HepG2 (cell line): ENCODE measurements at regions of chr9 and their contacts with region 1.

Region 1: GRCh38 chr9:34178520-34179212 is at the start of gene UBAP1:
- DNase-seq: peak; percentile 96
- ATAC-seq: peak; percentile 96
- H3K4me3 ChIP-seq: peak within 1 kb of the TSS; percentile 80 to 97 (median 84)
- H3K27ac ChIP-seq: peak within 1 kb of the TSS; percentile 82
- H3K4me1 ChIP-seq: peaks cover 8% of the 10 kb centered on the region
- H3K27me3 ChIP-seq: peaks cover 0 to 3% of the 10 kb centered on the region in 2 experiments; a peak in 1 of 5 replicates
- CTCF ChIP-seq: no peak
- EP300 ChIP-seq: no peak
- POLR2A ChIP-seq: peak; percentile 61 to 90
- RAD21 ChIP-seq: no peak
- total RNA-seq, gene UBAP1: 19.5 and 25.0 TPM in 2 replicates

Region 2: DNA sequence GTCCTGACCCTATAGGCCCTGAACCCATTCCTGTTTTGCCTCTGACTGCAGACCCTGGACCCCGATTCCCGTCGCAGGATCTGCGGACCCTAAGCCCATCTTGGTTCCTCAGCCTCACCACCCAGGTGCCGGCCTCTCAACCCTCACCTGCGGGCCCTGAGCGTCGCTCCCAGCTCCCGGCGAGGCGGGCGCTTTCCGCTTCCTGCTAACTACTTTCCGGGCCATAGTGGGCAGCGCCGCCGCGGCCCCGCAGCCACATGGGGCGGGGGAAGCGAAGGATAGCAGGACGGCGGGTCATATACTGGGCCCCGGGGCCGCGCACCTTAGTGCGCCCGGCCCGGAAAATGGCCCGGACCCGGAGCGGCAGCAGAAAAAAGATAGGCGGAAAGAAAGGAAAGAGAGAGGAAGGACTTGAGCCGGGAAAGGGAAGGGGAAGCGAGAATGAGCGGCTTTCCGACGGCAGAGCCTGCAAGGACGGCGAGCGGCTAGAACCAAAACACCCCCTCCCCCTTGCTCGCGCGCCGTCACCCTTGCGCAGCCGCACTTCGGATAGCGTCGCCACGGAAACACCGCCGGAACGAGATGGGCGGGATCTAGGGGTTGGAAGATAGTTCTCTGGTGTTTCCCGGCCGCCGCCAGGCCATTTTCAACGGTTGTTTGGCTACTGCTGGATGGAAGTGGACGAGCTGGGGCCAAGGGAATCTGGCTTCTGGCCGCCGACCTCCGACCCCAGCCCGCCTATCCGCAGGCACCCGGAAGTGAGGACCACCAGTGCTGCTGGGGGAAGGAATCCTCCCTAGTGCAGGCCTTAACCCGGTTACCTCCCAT is 52.2 kb before region 1 on chr9 and contains the start of gene DCAF12:
- CTCF ChIA-PET with region 1: no interaction called
- POLR2A ChIA-PET with region 1: interaction called, 8 read pairs
- in situ Hi-C with region 1: no loop called
- intact Hi-C with region 1: loop called (anchors 5 kb)
- DNase-seq: peak; percentile 85
- ATAC-seq: peak; percentile 93
- H3K4me3 ChIP-seq: peak within 1 kb of the TSS; percentile 66 to 88 (median 86)
- H3K27ac ChIP-seq: peak within 1 kb of the TSS; percentile 86
- H3K4me1 ChIP-seq: peaks cover 48% of the 10 kb centered on the region
- H3K27me3 ChIP-seq: no peaks in the 10 kb centered on the region; a peak in 1 of 5 replicates
- CTCF ChIP-seq: 0 out of 2 replicates have a peak, but pooled peaks have one; percentile 4
- EP300 ChIP-seq: 0 out of 4 replicates have a peak, but pooled peaks of 1 of the 2 experiments have one; percentile 5
- POLR2A ChIP-seq: peak; percentile 73 to 77
- RAD21 ChIP-seq: peak; percentile 43
- total RNA-seq, gene DCAF12: 26.8 and 36.6 TPM in 2 replicates

Region 3: DNA sequence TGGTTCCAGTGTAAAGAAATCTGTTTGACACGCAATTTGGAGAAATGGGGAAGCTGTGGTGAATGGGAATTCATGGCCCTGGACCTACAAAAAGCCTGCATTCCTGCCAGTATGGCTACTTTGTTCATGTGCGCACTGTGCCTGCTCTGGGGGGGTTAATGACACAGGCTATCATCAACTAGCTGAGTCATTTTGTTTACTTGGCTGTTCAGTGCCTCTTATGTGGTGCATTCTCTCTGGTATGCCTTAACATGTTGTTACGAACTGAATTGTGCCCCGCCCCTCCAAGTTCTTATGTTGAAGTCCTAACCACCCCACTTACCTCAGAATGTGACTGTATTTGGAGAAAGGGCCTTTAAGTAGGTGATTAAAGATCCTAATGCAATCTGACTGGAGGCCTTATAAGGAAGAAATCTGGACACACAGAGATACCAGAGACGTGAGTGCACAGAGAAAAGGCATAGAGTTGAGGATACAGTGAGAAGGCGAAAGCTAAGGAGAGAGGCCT is 20.2 kb before region 1 on chr9:
- CTCF ChIA-PET with region 1: no interaction called
- POLR2A ChIA-PET with region 1: interaction called, 35 read pairs
- in situ Hi-C with region 1: no loop called
- intact Hi-C with region 1: no loop called
- DNase-seq: peak; percentile 79
- ATAC-seq: peak; percentile 95
- H3K4me3 ChIP-seq: peak overlapping the region in 2 of 3 experiments; percentile 22; a peak in 1 of 6 replicates
- H3K27ac ChIP-seq: no peak overlapping the region
- H3K4me1 ChIP-seq: peaks cover 27% of the 10 kb centered on the region
- H3K27me3 ChIP-seq: no peaks in the 10 kb centered on the region
- CTCF ChIP-seq: no peak
- EP300 ChIP-seq: peak in 1 of 2 experiments; percentile 25; a peak in 1 of 4 replicates
- POLR2A ChIP-seq: no peak
- RAD21 ChIP-seq: no peak

Region 4: GRCh38 chr9:34163458-34163857 is 15.2 kb before region 1 on chr9:
- CTCF ChIA-PET with region 1: no interaction called
- POLR2A ChIA-PET with region 1: interaction called, 35 read pairs
- in situ Hi-C with region 1: no loop called
- intact Hi-C with region 1: no loop called
- DNase-seq: no peak
- ATAC-seq: no peak
- H3K4me3 ChIP-seq: no peak overlapping the region
- H3K27ac ChIP-seq: no peak overlapping the region
- H3K4me1 ChIP-seq: peaks cover 14% of the 10 kb centered on the region
- H3K27me3 ChIP-seq: no peaks in the 10 kb centered on the region
- CTCF ChIP-seq: no peak
- EP300 ChIP-seq: no peak
- POLR2A ChIP-seq: no peak
- RAD21 ChIP-seq: no peak

Region 5: DNA sequence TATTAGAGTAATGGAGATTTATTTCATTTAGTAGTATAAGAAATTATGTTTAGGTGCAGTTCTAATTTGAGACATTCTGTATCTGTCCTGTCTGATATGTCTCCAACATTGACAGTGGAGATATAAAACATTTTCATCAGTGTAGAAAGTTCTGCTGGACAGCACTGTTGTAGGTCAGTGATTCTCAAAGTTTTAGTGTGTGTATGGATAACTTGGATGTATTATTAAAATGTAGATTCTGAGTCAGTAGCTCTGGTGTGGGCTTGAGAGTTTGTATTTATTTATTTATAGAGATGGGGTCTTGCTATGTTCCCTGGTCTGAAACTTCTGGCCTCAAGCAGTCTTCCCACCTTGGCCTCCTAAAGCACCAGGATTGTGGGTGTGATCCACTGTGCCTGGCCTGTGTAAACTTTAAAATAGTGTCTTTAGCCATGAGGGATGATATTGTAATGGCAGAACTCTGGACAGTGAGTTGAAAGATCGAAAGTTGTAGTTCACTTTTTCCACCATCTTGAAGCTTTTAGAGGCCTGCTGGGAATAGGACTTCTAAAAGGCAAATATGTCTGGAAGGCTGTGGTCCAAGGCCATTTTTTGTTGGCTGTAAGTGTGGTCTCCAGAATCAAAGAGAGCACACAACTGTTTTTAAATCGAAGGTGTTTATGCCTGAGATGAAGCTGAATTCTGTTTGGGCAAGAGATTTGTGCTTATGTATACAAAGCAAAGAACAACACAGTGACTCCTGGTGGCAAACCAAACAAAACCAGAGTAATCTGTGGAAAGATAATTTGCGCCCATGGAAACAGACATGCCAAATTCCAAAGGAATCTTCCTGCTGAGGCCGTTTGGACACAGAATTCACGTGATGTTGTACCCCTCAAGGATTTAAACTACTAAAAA is 12.6 kb after region 1 on chr9:
- CTCF ChIA-PET with region 1: no interaction called
- POLR2A ChIA-PET with region 1: interaction called, 18 read pairs
- in situ Hi-C with region 1: no loop called
- intact Hi-C with region 1: no loop called
- DNase-seq: peak; percentile 73
- ATAC-seq: peak; percentile 86
- H3K4me3 ChIP-seq: peak overlapping the region; percentile 1 to 39 (median 24); a peak in 2 of 6 replicates
- H3K27ac ChIP-seq: peak overlapping the region; percentile 65
- H3K4me1 ChIP-seq: peaks cover 26% of the 10 kb centered on the region
- H3K27me3 ChIP-seq: no peaks in the 10 kb centered on the region
- CTCF ChIP-seq: peak; percentile 61
- EP300 ChIP-seq: peak in 1 of 2 experiments; percentile 41; a peak in 1 of 4 replicates
- POLR2A ChIP-seq: no peak
- RAD21 ChIP-seq: no peak

Region 6: GRCh38 chr9:34222451-34222850 is 43.8 kb after region 1 on chr9:
- CTCF ChIA-PET with region 1: no interaction called
- POLR2A ChIA-PET with region 1: interaction called, 10 read pairs
- in situ Hi-C with region 1: no loop called
- intact Hi-C with region 1: no loop called
- DNase-seq: peak; percentile 34
- ATAC-seq: peak; percentile 69
- H3K4me3 ChIP-seq: no peak overlapping the region
- H3K27ac ChIP-seq: peak overlapping the region; percentile 48
- H3K4me1 ChIP-seq: peaks cover 35% of the 10 kb centered on the region
- H3K27me3 ChIP-seq: no peaks in the 10 kb centered on the region
- CTCF ChIP-seq: no peak
- EP300 ChIP-seq: no peak; a peak in 1 of 4 replicates
- POLR2A ChIP-seq: no peak
- RAD21 ChIP-seq: no peak

Region 7: GRCh38 chr9:34252670-34253459 is 74.2 kb after region 1 on chr9:
- CTCF ChIA-PET with region 1: no interaction called
- POLR2A ChIA-PET with region 1: interaction called, 5 read pairs
- in situ Hi-C with region 1: no loop called
- intact Hi-C with region 1: loop called (anchors 5 kb)
- DNase-seq: peak; percentile 50
- ATAC-seq: peak; percentile 72
- H3K4me3 ChIP-seq: no peak overlapping the region
- H3K27ac ChIP-seq: no peak overlapping the region
- H3K4me1 ChIP-seq: no peaks in the 10 kb centered on the region
- H3K27me3 ChIP-seq: no peaks in the 10 kb centered on the region
- CTCF ChIP-seq: peak; percentile 81
- EP300 ChIP-seq: no peak
- POLR2A ChIP-seq: no peak
- RAD21 ChIP-seq: peak; percentile 67